Activated CD4-positive, alpha-beta T cell treated with anti-CD3 and anti-CD28 coated beads, Interleukin-2, amount 10 ng/mL, durations not matched to agents 24 days and 14 days (primary cell): ENCODE measurements at regions of chr1 and their contacts with region 1.

Region 1: DNA sequence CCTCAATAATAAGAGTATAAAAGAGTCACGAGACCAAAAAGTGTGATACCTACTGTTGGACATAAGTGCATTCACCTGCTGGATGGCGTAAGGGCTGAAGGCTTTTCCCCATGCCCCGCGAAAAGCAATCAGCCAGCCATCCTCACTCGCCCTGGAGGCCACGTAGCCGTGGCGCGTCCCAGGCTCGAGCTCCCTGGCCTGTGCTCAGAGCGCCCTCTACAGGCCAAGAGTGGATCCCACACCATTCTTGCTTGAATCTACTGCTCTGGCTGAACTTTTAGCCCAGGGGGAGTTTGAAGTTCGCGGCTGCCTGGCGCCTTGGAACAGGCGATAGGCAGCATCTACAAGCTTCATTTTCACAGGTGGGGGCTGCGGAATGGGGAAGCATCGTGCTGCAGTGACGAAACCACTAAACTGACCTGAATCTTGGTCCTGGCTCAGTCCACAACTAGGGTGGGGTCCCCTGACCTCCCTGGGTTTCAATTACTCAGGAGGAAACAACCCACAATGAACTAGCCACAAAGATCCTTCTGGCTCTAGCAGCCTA is 70.3 kb upstream of the SERBP1 start:
- DNase-seq: peak; percentile 96
- H3K4me3 Mint-ChIP-seq: peak overlapping the region; percentile 53
- H3K27ac Mint-ChIP-seq: no peak overlapping the region
- H3K4me1 Mint-ChIP-seq: peaks cover 8% of the 10 kb centered on the region
- H3K27me3 Mint-ChIP-seq: peaks cover 8% of the 10 kb centered on the region

Region 2: GRCh38 chr1:66996018-66996682 is 504.3 kb before region 1 on chr1:
- intact Hi-C with region 1: loop called (anchors 5 kb)
- DNase-seq: peak; percentile 90
- H3K4me3 Mint-ChIP-seq: no peak overlapping the region
- H3K27ac Mint-ChIP-seq: no peak overlapping the region
- H3K4me1 Mint-ChIP-seq: peaks cover 11% of the 10 kb centered on the region
- H3K27me3 Mint-ChIP-seq: no peaks in the 10 kb centered on the region

Region 3: GRCh38 chr1:67053785-67054772 is 446.4 kb before region 1 on chr1 and contains the start of gene SLC35D1:
- intact Hi-C with region 1: loop called (anchors 10 kb)
- DNase-seq: peak; percentile 94
- H3K4me3 Mint-ChIP-seq: peak within 1 kb of the TSS; percentile 86
- H3K27ac Mint-ChIP-seq: peak within 1 kb of the TSS; percentile 95
- H3K4me1 Mint-ChIP-seq: peaks cover 28% of the 10 kb centered on the region
- H3K27me3 Mint-ChIP-seq: peaks cover 10% of the 10 kb centered on the region
- total RNA-seq, gene SLC35D1: 15.9 and 16.1 TPM in 2 replicates

Region 4: GRCh38 chr1:67149179-67149770 is 351.2 kb before region 1 on chr1:
- intact Hi-C with region 1: loop called (anchors 2 kb)
- DNase-seq: peak; percentile 86
- H3K4me3 Mint-ChIP-seq: no peak overlapping the region
- H3K27ac Mint-ChIP-seq: peak overlapping the region; percentile 55
- H3K4me1 Mint-ChIP-seq: peaks cover 32% of the 10 kb centered on the region
- H3K27me3 Mint-ChIP-seq: peaks cover 4% of the 10 kb centered on the region

Region 5: GRCh38 chr1:67230539-67230938 is 269.9 kb before region 1 on chr1:
- intact Hi-C with region 1: loop called (anchors 1 kb)
- DNase-seq: no peak
- H3K4me3 Mint-ChIP-seq: no peak overlapping the region
- H3K27ac Mint-ChIP-seq: no peak overlapping the region
- H3K4me1 Mint-ChIP-seq: peaks cover 9% of the 10 kb centered on the region
- H3K27me3 Mint-ChIP-seq: no peaks in the 10 kb centered on the region

Region 6: DNA sequence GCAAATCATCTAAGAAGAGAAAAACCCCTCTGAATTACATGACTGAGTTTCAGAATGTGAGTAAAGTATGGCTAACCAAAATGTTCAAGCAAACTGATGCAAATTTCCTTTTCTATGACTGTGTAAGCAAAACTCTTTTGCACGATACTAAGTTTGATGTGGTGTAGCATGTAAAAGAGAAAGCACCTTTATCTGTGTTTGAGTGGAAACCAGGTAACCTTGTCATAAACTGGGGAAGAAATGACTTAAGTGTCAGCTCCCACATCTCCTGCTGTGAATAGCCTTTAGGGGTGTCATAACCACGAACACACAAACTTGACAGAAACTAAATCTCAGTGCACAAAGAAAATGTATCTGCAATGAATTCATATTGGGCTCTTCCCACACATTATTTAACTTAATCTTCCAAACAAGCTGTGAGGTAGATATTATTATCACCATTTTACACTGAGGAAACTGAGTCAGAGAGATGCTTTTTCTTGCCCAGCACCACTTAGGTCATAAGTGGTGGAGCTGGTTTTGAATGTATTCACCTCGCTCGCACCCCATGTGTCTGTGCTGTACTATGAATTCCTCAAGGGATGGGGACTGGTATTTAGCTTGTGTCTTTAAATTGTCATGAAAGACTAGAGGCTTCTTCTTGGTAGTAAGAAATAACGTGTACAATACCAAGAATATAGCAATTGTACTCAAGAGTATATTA is 225.7 kb before region 1 on chr1:
- intact Hi-C with region 1: no loop called
- DNase-seq: peak; percentile 85
- H3K4me3 Mint-ChIP-seq: no peak overlapping the region
- H3K27ac Mint-ChIP-seq: peak overlapping the region; percentile 76
- H3K4me1 Mint-ChIP-seq: peaks cover 43% of the 10 kb centered on the region
- H3K27me3 Mint-ChIP-seq: no peaks in the 10 kb centered on the region

Region 7: GRCh38 chr1:67339623-67340343 is 160.7 kb before region 1 on chr1:
- intact Hi-C with region 1: loop called (anchors 5 kb)
- DNase-seq: peak; percentile 85
- H3K4me3 Mint-ChIP-seq: peak overlapping the region; percentile 68
- H3K27ac Mint-ChIP-seq: peak overlapping the region; percentile 94
- H3K4me1 Mint-ChIP-seq: peaks cover 77% of the 10 kb centered on the region
- H3K27me3 Mint-ChIP-seq: no peaks in the 10 kb centered on the region

Region 8: GRCh38 chr1:67350783-67351182 is 149.7 kb before region 1 on chr1:
- intact Hi-C with region 1: loop called (anchors 1 kb)
- DNase-seq: peak; percentile 79
- H3K4me3 Mint-ChIP-seq: peak overlapping the region; percentile 49
- H3K27ac Mint-ChIP-seq: peak overlapping the region; percentile 72
- H3K4me1 Mint-ChIP-seq: peaks cover 41% of the 10 kb centered on the region
- H3K27me3 Mint-ChIP-seq: no peaks in the 10 kb centered on the region

Region 9: GRCh38 chr1:67446893-67447292 is 53.6 kb before region 1 on chr1:
- intact Hi-C with region 1: no loop called
- DNase-seq: no peak
- H3K4me3 Mint-ChIP-seq: no peak overlapping the region
- H3K27ac Mint-ChIP-seq: no peak overlapping the region
- H3K4me1 Mint-ChIP-seq: peaks cover 7% of the 10 kb centered on the region
- H3K27me3 Mint-ChIP-seq: peaks cover 2% of the 10 kb centered on the region

Region 10: DNA sequence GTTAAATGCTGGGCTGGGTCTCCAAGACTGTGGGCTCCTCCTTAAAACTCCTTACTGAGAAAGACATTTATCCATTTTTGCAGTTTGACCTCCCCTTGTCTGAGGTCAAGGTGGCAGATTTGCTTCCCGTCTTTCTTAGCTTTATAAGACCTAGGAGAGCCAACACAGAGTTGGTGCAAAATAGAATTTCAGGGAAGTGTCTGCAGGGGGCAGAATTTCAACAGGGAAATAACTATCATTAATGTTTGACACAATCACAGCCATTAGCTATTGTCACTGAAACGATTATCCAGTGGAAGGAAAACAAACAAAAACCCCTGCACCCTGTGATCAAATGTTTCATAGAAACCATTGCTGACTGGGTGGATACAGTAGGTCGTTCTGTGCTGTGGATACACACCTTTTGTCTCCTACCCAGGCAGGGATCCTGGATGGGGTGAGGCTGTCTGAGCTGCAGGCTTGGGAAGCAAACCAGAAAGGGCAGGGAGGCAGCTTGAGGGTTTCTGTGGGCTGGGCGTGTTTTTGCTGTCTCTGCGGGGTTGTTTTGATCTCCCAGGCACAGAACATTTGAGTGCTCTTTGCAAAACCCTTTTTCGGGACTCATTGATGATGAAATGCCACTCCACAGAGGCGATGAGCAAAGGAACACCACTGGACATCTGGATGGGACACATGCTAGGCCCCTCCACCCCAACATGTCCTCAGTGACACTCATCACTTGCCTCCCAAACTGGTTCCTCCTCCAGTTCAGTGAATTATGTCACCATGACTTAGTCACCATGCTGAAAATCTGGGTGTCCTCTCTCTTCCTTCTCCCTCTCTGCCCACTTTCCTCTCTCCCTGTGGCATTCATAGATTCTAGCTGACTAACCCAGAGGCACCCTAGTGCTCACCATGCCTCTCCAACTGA is 23.9 kb after region 1 on chr1:
- intact Hi-C with region 1: no loop called
- DNase-seq: no peak
- H3K4me3 Mint-ChIP-seq: no peak overlapping the region
- H3K27ac Mint-ChIP-seq: no peak overlapping the region
- H3K4me1 Mint-ChIP-seq: no peaks in the 10 kb centered on the region
- H3K27me3 Mint-ChIP-seq: peaks cover 2% of the 10 kb centered on the region

Region 11: GRCh38 chr1:67748630-67749029 is 248.1 kb after region 1 on chr1:
- intact Hi-C with region 1: no loop called
- DNase-seq: no peak
- H3K4me3 Mint-ChIP-seq: peak overlapping the region; percentile 21
- H3K27ac Mint-ChIP-seq: no peak overlapping the region
- H3K4me1 Mint-ChIP-seq: peaks cover 23% of the 10 kb centered on the region
- H3K27me3 Mint-ChIP-seq: peaks cover 18% of the 10 kb centered on the region